HepG2 (cell line): ENCODE measurements at regions of chr5 and their contacts with region 1.

Region 1: GRCh38 chr5:115069087-115069968 is 100.4 kb downstream of the TRIM36 start:
- DNase-seq: peak; percentile 64
- ATAC-seq: peak; percentile 81
- H3K4me3 ChIP-seq: peak overlapping the region; percentile 50 to 67 (median 54); a peak in 4 of 6 replicates
- H3K27ac ChIP-seq: no peak overlapping the region
- H3K4me1 ChIP-seq: peaks cover 11% of the 10 kb centered on the region
- H3K27me3 ChIP-seq: no peaks in the 10 kb centered on the region
- CTCF ChIP-seq: peak; percentile 83
- EP300 ChIP-seq: no peak
- POLR2A ChIP-seq: no peak
- RAD21 ChIP-seq: 0 out of 2 replicates have a peak, but pooled peaks have one; percentile 55

Region 2: DNA sequence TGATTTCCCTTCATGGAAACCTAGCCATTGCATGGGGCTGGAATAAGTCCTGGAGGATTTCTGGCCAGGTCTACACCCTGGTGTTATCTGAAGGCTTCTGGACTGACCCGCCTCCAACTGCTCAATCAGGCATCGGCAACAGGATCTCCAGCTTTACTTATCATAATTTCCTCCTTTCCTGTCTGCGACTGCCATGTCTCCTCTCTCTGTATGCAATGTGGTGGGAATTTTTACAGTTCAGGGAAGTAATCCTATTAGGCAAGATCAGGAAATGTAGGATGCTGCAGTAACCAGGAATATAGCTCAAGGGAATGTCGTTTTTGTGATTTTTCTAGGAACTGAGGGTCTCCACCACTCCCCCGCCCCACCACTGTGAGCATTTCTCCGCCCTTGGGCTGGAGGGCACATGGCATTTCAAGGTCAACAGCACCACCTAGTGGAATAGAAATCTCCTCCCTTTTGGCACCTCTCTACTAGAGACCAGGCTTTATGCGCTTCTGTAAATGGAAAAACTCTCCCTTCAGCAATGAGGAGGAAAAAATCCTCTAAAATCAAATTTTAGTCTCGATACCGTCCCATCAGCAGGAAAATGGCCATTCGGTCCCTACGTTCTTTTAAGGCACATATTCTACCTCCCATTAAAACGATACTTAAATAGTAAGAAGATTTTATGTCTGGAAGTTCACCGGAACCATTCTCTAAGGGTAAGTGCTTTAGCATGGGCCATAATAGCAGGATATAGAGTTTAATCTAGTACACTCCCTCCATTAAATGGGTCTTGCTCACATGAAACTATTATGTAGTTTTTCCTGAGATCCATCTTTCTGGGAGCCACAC is 1462.8 kb before region 1 on chr5:
- CTCF ChIA-PET with region 1: no interaction called
- POLR2A ChIA-PET with region 1: no interaction called
- in situ Hi-C with region 1: loop called (anchors 25 kb)
- intact Hi-C with region 1: no loop called
- DNase-seq: peak; percentile 61
- ATAC-seq: peak; percentile 100
- H3K4me3 ChIP-seq: peak overlapping the region in 1 of 3 experiments; percentile 11; a peak in 1 of 6 replicates
- H3K27ac ChIP-seq: no peak overlapping the region
- H3K4me1 ChIP-seq: 0 out of 2 replicates have a peak, but pooled peaks cover 7% of the 10 kb centered on the region
- H3K27me3 ChIP-seq: 0 out of 5 replicates have a peak, but pooled peaks cover 0 to 2% of the 10 kb centered on the region in 2 experiments
- CTCF ChIP-seq: peak; percentile 91
- EP300 ChIP-seq: no peak
- POLR2A ChIP-seq: no peak
- RAD21 ChIP-seq: peak; percentile 62

Region 3: DNA sequence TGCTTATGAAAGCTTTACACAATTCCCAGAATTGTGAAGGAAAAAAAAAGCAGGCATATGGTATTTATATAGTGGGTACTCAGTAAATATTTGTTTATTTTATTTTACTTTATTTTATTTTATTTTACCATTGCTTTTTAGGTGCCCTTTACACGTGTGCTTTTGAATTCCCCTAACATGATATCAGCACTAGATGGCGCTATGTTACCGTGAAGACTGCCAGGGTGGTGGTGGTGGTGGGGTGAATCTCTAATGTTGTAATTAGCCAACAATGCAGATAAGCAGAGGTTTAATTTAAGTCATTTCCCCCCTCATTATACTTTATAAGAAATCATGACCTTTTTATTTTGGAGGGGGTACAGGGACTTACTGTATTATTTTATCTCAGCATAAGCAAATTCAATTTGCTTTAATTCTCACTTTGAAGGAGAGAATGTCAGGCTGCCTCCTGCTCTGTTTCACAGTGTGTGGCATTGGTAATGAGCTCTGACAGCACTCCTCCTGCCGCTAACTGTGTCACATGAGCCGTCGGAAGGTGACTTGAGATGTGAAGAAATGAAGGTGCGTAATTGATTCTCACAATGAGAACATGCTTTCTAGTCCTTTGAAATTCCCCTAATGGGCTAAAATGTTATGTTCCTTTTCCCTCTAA is 1390.3 kb before region 1 on chr5:
- CTCF ChIA-PET with region 1: interaction called, 6 read pairs
- POLR2A ChIA-PET with region 1: no interaction called
- in situ Hi-C with region 1: loop called (anchors 10 kb)
- intact Hi-C with region 1: no loop called
- DNase-seq: peak; percentile 30
- ATAC-seq: peak; percentile 76
- H3K4me3 ChIP-seq: no peak overlapping the region
- H3K27ac ChIP-seq: no peak overlapping the region
- H3K4me1 ChIP-seq: no peaks in the 10 kb centered on the region
- H3K27me3 ChIP-seq: no peaks in the 10 kb centered on the region
- CTCF ChIP-seq: peak; percentile 75
- EP300 ChIP-seq: no peak
- POLR2A ChIP-seq: no peak
- RAD21 ChIP-seq: peak; percentile 39; the same call in 1 of the 2 replicates

Region 4: GRCh38 chr5:114504560-114504959 is 564.8 kb before region 1 on chr5:
- CTCF ChIA-PET with region 1: no interaction called
- POLR2A ChIA-PET with region 1: no interaction called
- in situ Hi-C with region 1: no loop called
- intact Hi-C with region 1: no loop called
- DNase-seq: no peak
- ATAC-seq: no peak
- H3K4me3 ChIP-seq: no peak overlapping the region
- H3K27ac ChIP-seq: no peak overlapping the region
- H3K4me1 ChIP-seq: no peaks in the 10 kb centered on the region
- H3K27me3 ChIP-seq: no peaks in the 10 kb centered on the region
- CTCF ChIP-seq: no peak
- EP300 ChIP-seq: no peak
- POLR2A ChIP-seq: no peak
- RAD21 ChIP-seq: no peak

Region 5: GRCh38 chr5:114789773-114790402 is 279.4 kb before region 1 on chr5:
- CTCF ChIA-PET with region 1: no interaction called
- POLR2A ChIA-PET with region 1: no interaction called
- in situ Hi-C with region 1: loop called (anchors 25 kb)
- intact Hi-C with region 1: no loop called
- DNase-seq: peak; percentile 8
- ATAC-seq: peak; percentile 69
- H3K4me3 ChIP-seq: no peak overlapping the region
- H3K27ac ChIP-seq: no peak overlapping the region
- H3K4me1 ChIP-seq: no peaks in the 10 kb centered on the region
- H3K27me3 ChIP-seq: no peaks in the 10 kb centered on the region; a peak in 1 of 5 replicates
- CTCF ChIP-seq: peak; percentile 55
- EP300 ChIP-seq: no peak
- POLR2A ChIP-seq: no peak
- RAD21 ChIP-seq: no peak

Region 6: DNA sequence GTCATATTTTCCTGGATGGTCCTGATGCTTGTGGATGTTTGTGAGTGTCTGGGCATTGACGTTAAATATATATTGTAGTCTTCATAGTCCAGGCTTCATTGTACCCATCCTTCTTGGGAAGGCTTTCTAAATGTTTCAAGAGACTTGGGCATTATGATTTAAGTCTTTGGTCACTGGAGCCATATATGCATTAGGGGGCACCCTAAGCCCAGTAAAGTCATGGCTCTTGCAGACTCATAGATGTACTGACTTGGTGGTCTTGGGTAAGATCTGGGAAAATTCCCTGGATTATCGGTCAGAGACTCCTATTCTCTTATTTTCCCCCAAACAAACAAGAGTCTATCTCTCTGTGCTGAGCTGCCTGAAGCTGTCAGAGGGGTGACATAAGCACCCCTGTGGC is 170.7 kb before region 1 on chr5:
- CTCF ChIA-PET with region 1: no interaction called
- POLR2A ChIA-PET with region 1: no interaction called
- in situ Hi-C with region 1: no loop called
- intact Hi-C with region 1: loop called (anchors 2 kb)
- DNase-seq: no peak
- ATAC-seq: no peak
- H3K4me3 ChIP-seq: no peak overlapping the region
- H3K27ac ChIP-seq: no peak overlapping the region
- H3K4me1 ChIP-seq: no peaks in the 10 kb centered on the region
- H3K27me3 ChIP-seq: no peaks in the 10 kb centered on the region
- CTCF ChIP-seq: peak; percentile 39
- EP300 ChIP-seq: no peak
- POLR2A ChIP-seq: no peak
- RAD21 ChIP-seq: no peak

Region 7: GRCh38 chr5:114924769-114925168 is 144.6 kb before region 1 on chr5:
- CTCF ChIA-PET with region 1: no interaction called
- POLR2A ChIA-PET with region 1: no interaction called
- in situ Hi-C with region 1: no loop called
- intact Hi-C with region 1: no loop called
- DNase-seq: no peak
- ATAC-seq: no peak
- H3K4me3 ChIP-seq: no peak overlapping the region
- H3K27ac ChIP-seq: no peak overlapping the region
- H3K4me1 ChIP-seq: no peaks in the 10 kb centered on the region
- H3K27me3 ChIP-seq: no peaks in the 10 kb centered on the region
- CTCF ChIP-seq: no peak
- EP300 ChIP-seq: no peak
- POLR2A ChIP-seq: no peak
- RAD21 ChIP-seq: no peak